ENCODE measurements at regions of chrX and their contacts with region 1.

Region 1: GRCh38 chrX:13653022-13653693 is at the start of gene TCEANC:
- DNase-seq: peak; percentile 95
- H3K4me3 ChIP-seq: peak within 1 kb of the TSS; percentile 33 to 89 (median 87)
- H3K27ac ChIP-seq: peak within 1 kb of the TSS; percentile 63
- H3K4me1 ChIP-seq: peaks cover 6% of the 10 kb centered on the region
- H3K27me3 ChIP-seq: no peaks in the 10 kb centered on the region
- CTCF ChIP-seq: no peak
- POLR2A ChIP-seq: peak; percentile 59
- total RNA-seq, gene TCEANC: 0.75 and 1.8 TPM in 2 replicates

Region 2: GRCh38 chrX:13688958-13689740 is 36.0 kb after region 1 on chrX and contains the start of gene RAB9A:
- CTCF ChIA-PET with region 1: interaction called, 7 read pairs
- POLR2A ChIA-PET with region 1: no interaction called
- dilution Hi-C with region 1: no loop called
- intact Hi-C with region 1: loop called (anchors 1 kb)
- DNase-seq: peak; percentile 76
- H3K4me3 ChIP-seq: peak within 1 kb of the TSS; percentile 44 to 77 (median 64)
- H3K27ac ChIP-seq: peak within 1 kb of the TSS; percentile 70
- H3K4me1 ChIP-seq: peaks cover 12% of the 10 kb centered on the region
- H3K27me3 ChIP-seq: no peaks in the 10 kb centered on the region
- CTCF ChIP-seq: no peak
- POLR2A ChIP-seq: peak; percentile 66
- total RNA-seq, gene RAB9A: 17.2 and 19.2 TPM in 2 replicates